Panc1 (cell line): ENCODE measurements at regions of chr3 and their contacts with region 1.

Region 1: DNA sequence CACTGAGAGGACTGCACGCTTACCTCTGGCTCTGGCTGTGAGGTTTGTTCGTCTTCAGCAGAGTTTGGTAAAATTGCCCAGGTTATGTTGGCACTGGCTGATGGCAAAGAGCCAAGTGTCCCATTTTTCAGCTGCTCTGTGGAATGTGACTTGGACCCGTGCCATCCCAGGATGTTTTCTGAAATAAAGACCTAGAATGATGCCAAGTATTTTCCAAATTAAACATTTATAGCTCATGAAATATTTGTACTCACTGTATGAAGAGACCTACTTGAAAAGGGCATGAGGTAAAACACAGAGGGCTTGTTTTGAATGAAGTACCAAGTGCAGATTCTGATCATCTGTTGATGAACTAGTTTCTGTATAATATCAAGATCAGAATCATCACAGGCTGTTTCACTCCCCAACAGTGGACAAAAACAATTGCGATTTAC is 200.5 kb downstream of the STT3B start:
- DNase-seq: no peak
- ATAC-seq: no peak
- H3K4me3 ChIP-seq: no peak overlapping the region
- H3K27ac ChIP-seq: no peak overlapping the region
- H3K4me1 ChIP-seq: no peaks in the 10 kb centered on the region
- H3K27me3 ChIP-seq: no peaks in the 10 kb centered on the region
- CTCF ChIP-seq: no peak

Region 2: DNA sequence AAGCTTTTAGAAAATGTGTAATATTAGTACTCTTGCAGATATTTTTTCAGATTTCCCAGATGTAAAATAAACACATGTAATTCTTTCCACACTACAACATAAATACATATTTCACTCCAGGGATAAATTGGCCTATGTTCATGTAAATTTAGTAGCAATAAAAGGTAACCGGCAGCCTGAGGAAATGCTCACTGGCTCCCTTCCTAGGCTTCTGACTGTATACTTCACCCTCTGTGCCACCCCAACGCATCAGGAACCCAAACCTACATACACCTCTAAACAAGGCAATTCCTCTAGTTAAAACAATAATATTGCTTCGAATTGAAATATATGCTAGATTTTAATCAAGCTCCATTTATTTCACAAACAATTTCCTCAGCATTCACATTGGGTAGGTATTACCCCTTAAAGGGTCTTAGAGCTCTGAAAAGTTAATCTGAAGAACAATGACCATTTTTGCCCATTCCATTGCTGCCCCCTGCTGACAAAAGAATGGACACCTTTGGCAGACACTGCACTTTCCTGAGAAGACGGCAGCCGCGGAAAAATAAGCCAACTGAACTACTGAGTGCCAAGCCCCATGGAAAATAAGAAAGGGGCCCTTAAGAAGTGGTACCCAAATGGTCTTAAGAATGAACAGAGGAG is 35.4 kb after region 1 on chr3:
- CTCF ChIA-PET with region 1: no interaction called
- POLR2A ChIA-PET with region 1: interaction called, 12 read pairs
- in situ Hi-C with region 1: no loop called
- intact Hi-C with region 1: no loop called
- DNase-seq: peak; percentile 2
- ATAC-seq: peak; percentile 45; the same call in 1 of the 2 replicates
- H3K4me3 ChIP-seq: no peak overlapping the region
- H3K27ac ChIP-seq: no peak overlapping the region
- H3K4me1 ChIP-seq: no peaks in the 10 kb centered on the region
- H3K27me3 ChIP-seq: no peaks in the 10 kb centered on the region
- CTCF ChIP-seq: peak; percentile 57